ENCODE measurements at regions of chr20 and their contacts with region 1.

Region 1: GRCh38 chr20:2059411-2059810 is 42.2 kb upstream of the STK35 start:
- DNase-seq: no peak
- H3K4me3 ChIP-seq: no peak overlapping the region
- H3K4me3 Mint-ChIP-seq: no peak overlapping the region
- H3K27ac Mint-ChIP-seq: no peak overlapping the region
- H3K4me1 ChIP-seq: no peaks in the 10 kb centered on the region
- H3K4me1 Mint-ChIP-seq: no peaks in the 10 kb centered on the region
- H3K27me3 ChIP-seq: no peaks in the 10 kb centered on the region
- H3K27me3 Mint-ChIP-seq: no peaks in the 10 kb centered on the region
- CTCF ChIP-seq: no peak

Region 2: GRCh38 chr20:2022163-2022562 is 37.2 kb before region 1 on chr20:
- CTCF ChIA-PET with region 1: no interaction called
- POLR2A ChIA-PET with region 1: no interaction called
- intact Hi-C with region 1: loop called (anchors 1 kb)
- DNase-seq: no peak
- H3K4me3 ChIP-seq: no peak overlapping the region
- H3K4me3 Mint-ChIP-seq: no peak overlapping the region
- H3K27ac Mint-ChIP-seq: no peak overlapping the region
- H3K4me1 ChIP-seq: no peaks in the 10 kb centered on the region
- H3K4me1 Mint-ChIP-seq: no peaks in the 10 kb centered on the region
- H3K27me3 ChIP-seq: no peaks in the 10 kb centered on the region
- H3K27me3 Mint-ChIP-seq: peaks cover 11% of the 10 kb centered on the region
- CTCF ChIP-seq: no peak

Measured in Caco-2 (cell line).